HEK293 (cell line): ENCODE measurements at regions of chr2 and their contacts with region 1.

Region 1: GRCh38 chr2:14923820-14924580 is 291.5 kb downstream of the LRATD1 start:
- H3K4me3 ChIP-seq: no peak overlapping the region
- H3K27ac ChIP-seq: no peak overlapping the region
- H3K4me1 ChIP-seq: no peaks in the 10 kb centered on the region
- CTCF ChIP-seq: no peak

Region 2: DNA sequence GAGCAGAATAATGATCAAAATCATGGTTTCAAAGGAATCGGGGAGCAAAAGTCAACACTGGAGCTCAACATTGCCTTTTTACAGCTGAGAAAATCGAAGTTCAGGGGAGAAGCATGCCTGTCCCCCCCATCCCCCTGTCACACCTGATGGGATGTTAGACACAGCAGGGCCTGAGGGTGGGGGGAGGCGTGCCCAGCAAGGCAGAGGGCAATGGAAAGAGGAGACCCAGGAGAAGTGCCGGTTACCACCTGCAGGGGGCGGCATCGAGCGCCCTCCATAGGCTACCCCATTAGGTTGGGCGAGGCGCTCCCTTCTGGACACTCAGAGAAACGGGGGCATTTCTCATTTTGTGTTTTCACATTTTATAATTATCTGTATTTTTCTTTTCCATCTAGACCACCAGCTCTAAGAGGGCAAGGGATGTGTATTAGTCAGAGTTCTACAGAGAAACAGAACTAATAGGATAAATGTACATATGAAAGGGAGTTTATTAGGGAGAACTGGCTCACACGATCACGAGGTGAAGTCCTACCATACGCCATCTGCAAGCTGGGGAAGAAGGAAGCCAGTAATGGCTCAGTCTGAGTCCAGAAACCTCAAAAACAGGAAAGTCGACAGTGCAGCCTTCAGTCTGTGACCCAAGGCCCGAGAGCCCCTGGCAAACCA is 20.2 kb before region 1 on chr2:
- CTCF ChIA-PET with region 1: interaction called, 15 read pairs
- POLR2A ChIA-PET with region 1: no interaction called
- H3K4me3 ChIP-seq: no peak overlapping the region
- H3K27ac ChIP-seq: no peak overlapping the region
- H3K4me1 ChIP-seq: no peaks in the 10 kb centered on the region
- CTCF ChIP-seq: peak; percentile 57; the same call in 1 of the 2 replicates